Caco-2 (cell line): ENCODE measurements at regions of chr17 and their contacts with region 1.

Region 1: DNA sequence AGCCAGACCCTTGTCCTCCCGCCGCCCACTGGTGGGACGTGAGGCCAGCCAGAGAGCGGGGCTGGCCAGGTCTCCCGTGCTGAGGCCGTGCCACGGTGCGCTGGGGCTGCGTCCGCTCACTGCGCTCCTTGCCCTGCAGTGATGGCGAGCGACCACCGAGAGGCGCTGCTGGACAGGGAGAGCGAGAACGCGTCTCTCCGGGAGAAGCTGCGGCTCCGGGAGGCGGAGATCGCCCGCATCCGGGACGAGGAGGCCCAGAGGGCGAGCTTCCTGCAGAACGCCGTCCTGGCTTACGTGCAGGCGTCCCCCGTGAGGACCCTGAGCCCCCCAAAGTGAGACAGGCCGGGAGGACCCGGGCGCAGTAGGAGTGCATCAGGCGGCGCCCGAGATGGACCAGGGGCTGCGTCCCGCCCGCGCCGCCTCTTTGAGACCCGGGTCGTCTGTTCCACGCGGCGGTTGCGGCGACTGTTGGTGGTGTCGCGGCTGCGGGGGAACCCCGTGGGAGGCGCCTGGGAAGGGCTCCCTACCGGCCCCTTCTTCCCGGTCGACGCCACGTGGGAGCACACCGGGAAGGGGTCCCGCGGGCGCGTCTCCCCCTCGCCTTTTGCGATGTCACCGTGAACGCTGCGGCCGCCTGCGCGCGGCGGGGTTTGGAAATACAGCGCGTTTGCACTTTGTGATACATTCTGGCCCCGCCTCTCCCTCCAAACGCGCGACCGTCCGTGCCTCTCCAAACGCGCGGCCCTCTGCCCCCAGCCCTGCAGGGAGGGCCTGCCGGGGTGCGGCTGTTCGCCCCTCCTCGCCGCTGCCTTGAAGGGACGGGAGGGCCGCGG is 792 bp upstream of the RAC3 start:
- DNase-seq: peak; percentile 89 to 93
- H3K4me3 ChIP-seq: peak overlapping the region; percentile 64
- H3K4me3 Mint-ChIP-seq: peak overlapping the region; percentile 85
- H3K27ac Mint-ChIP-seq: peak overlapping the region; percentile 80
- H3K4me1 ChIP-seq: peaks cover 14% of the 10 kb centered on the region
- H3K4me1 Mint-ChIP-seq: peaks cover 11% of the 10 kb centered on the region
- H3K27me3 ChIP-seq: no peaks in the 10 kb centered on the region
- H3K27me3 Mint-ChIP-seq: no peaks in the 10 kb centered on the region
- CTCF ChIP-seq: peak; percentile 91

Region 2: DNA sequence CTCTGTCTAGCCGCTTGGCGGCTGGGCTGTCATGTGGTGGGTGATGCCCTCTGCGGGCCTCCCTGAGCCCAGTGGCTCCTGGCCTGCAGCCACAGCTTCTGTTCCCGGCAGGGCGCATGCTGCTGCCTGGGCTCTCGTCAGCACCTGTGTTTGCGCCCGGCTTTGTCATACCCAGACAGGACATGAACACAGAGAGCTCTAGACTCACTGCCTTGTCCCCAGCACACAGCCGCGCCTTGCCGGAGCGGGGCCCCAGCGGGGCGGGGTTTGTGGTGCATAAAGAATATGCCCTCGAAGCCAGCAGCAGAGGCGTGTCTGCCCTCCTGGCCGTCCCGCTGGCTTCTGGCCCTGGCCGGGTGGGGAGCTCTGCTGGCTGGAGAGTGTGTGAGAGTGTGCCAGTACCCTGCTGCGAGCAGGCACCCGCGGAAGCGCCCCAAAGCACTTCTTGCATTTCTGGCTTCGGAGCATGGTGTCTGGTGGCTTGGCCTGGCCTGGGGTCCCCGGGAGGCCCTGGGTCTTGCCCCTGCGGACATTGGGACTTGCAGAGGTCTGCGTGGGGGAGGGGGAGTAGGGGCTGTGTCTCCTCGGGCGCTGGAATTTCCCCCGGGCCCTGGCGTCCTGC is 38.9 kb before region 1 on chr17:
- CTCF ChIA-PET with region 1: no interaction called
- POLR2A ChIA-PET with region 1: no interaction called
- intact Hi-C with region 1: no loop called
- DNase-seq: peak; percentile 41 to 71
- H3K4me3 ChIP-seq: no peak overlapping the region
- H3K4me3 Mint-ChIP-seq: no peak overlapping the region
- H3K27ac Mint-ChIP-seq: peak overlapping the region; percentile 56
- H3K4me1 ChIP-seq: peaks cover 18% of the 10 kb centered on the region; the same call in 1 of the 2 replicates
- H3K4me1 Mint-ChIP-seq: peaks cover 6% of the 10 kb centered on the region
- H3K27me3 ChIP-seq: no peaks in the 10 kb centered on the region
- H3K27me3 Mint-ChIP-seq: no peaks in the 10 kb centered on the region
- CTCF ChIP-seq: no peak

Region 3: DNA sequence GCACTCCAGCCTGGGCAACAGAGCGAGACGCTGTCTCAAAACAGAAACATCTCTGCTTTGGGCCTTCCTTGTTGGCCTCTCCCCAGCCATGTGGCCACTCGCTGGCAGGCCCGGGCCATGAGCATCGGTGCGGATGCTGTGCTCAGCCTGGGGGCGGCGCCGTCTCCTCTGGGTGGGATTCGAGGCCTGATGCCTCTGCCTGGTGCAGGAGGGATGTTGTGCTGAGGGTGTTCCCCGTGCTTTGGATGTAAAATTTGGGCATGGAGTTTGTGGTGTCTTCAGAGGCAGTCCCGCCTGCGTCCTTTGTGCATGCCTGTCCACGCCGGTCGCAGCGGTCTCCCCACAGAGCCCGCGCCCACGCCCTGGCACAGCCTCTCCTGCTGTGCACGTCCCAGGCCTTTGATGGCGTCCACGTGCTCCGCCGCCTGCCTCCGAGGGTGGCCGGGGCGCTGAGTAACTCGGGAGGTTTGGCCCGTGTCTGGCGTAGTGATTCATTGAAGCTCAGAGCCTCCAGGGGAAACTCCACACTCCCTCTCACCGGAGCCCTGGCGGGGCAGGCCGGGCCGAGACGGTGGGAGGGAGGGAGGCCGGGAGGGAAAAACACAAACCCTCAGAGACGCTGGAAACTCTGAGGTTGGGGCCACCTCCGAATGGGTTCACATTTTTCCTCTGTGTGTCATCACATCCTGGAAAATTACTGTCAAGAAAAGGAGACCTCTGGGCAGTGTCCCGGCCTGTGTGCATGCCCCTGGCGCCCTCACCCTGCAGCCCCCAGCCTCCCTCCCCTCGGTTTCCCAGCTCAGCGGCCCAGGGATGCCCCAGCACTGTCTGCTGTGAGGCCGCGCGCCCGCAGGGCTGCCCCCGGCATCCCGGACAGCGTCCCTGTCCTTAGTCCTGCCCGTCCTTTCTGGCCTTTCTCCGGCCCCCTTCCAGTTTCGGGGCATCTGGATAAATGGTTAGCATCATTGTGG is 27.0 kb before region 1 on chr17:
- CTCF ChIA-PET with region 1: no interaction called
- POLR2A ChIA-PET with region 1: no interaction called
- intact Hi-C with region 1: no loop called
- DNase-seq: peak; percentile 71 to 80
- H3K4me3 ChIP-seq: no peak overlapping the region
- H3K4me3 Mint-ChIP-seq: no peak overlapping the region
- H3K27ac Mint-ChIP-seq: no peak overlapping the region
- H3K4me1 ChIP-seq: peaks cover 19% of the 10 kb centered on the region
- H3K4me1 Mint-ChIP-seq: no peaks in the 10 kb centered on the region
- H3K27me3 ChIP-seq: no peaks in the 10 kb centered on the region
- H3K27me3 Mint-ChIP-seq: no peaks in the 10 kb centered on the region
- CTCF ChIP-seq: no peak

Region 4: GRCh38 chr17:82013772-82014321 is 16.8 kb before region 1 on chr17:
- CTCF ChIA-PET with region 1: no interaction called
- POLR2A ChIA-PET with region 1: no interaction called
- intact Hi-C with region 1: no loop called
- DNase-seq: no peak
- H3K4me3 ChIP-seq: no peak overlapping the region
- H3K4me3 Mint-ChIP-seq: no peak overlapping the region
- H3K27ac Mint-ChIP-seq: no peak overlapping the region
- H3K4me1 ChIP-seq: 0 out of 2 replicates have a peak, but pooled peaks cover 4% of the 10 kb centered on the region
- H3K4me1 Mint-ChIP-seq: no peaks in the 10 kb centered on the region
- H3K27me3 ChIP-seq: no peaks in the 10 kb centered on the region
- H3K27me3 Mint-ChIP-seq: no peaks in the 10 kb centered on the region
- CTCF ChIP-seq: no peak

Region 5: DNA sequence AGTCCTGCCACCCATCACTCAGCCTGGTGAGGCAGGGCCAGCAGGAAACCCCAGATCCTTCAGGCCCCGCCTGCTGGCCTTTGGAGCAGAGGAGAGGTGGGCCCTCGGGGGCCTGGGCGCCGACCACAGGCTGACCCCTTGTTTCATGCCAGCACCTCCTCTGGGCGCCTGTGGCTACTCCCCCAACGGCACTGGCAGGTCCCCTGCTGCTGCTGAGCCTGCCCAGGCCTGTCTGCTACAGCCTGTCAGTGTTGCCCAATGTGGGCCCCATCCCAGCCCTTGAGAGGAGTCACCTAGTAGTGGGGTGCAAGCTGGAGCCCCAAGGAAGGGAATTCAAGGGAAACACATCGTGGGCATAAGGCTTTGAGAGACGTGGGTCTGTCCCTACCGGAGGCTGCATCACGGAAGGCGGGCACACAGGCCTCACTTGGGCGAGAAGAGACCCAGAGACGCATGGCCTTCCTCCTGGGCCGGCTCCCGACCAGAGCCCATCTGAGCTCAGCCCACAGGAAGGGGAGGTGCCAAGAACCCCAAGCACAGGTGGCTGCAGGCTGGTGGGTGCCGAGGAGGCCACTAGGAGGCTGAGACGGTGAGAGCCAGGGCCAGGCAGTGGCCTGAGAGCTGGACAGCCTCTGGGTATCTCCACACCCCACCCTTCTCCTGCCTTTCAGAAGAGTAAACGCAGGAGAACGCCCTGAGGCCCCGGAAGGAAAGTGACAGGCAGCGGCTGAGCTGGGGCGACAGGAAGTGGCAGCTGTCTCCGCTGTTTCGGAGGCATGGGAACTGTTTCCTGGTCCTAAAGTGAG is 75.4 kb after region 1 on chr17:
- CTCF ChIA-PET with region 1: interaction called, 10 read pairs
- POLR2A ChIA-PET with region 1: interaction called, 4 read pairs
- intact Hi-C with region 1: loop called (anchors 2 kb)
- DNase-seq: peak; percentile 90 to 94
- H3K4me3 ChIP-seq: no peak overlapping the region
- H3K4me3 Mint-ChIP-seq: peak overlapping the region; percentile 50
- H3K27ac Mint-ChIP-seq: peak overlapping the region; percentile 87
- H3K4me1 ChIP-seq: peaks cover 63% of the 10 kb centered on the region
- H3K4me1 Mint-ChIP-seq: peaks cover 42% of the 10 kb centered on the region
- H3K27me3 ChIP-seq: no peaks in the 10 kb centered on the region
- H3K27me3 Mint-ChIP-seq: no peaks in the 10 kb centered on the region
- CTCF ChIP-seq: peak; percentile 33 to 75

Region 6: DNA sequence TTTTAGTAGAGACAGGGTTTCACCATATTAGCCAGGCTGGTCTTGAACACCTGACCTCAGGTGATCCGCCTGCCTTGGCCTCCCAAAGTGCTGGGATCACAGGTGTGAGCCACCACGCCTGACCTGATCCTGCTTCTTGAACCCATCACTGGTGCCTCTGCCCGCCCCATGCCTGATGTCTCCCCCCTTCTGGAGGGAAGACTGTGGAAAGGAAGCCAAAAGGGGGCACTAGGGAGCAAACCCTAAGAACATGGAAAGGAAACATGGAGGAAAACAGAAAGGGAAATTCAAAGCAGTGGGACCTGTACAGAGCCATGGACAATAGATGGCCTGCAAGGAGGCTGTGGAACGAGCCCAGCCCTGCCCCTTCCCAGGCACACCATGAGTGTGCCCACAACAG is 98.4 kb after region 1 on chr17:
- CTCF ChIA-PET with region 1: interaction called, 4 read pairs
- POLR2A ChIA-PET with region 1: interaction called, 11 read pairs
- intact Hi-C with region 1: no loop called
- DNase-seq: no peak
- H3K4me3 ChIP-seq: no peak overlapping the region
- H3K4me3 Mint-ChIP-seq: no peak overlapping the region
- H3K27ac Mint-ChIP-seq: no peak overlapping the region
- H3K4me1 ChIP-seq: no peaks in the 10 kb centered on the region
- H3K4me1 Mint-ChIP-seq: no peaks in the 10 kb centered on the region
- H3K27me3 ChIP-seq: no peaks in the 10 kb centered on the region
- H3K27me3 Mint-ChIP-seq: no peaks in the 10 kb centered on the region
- CTCF ChIP-seq: no peak

Region 7: GRCh38 chr17:82153745-82154375 is 123.2 kb after region 1 on chr17:
- CTCF ChIA-PET with region 1: interaction called, 15 read pairs
- POLR2A ChIA-PET with region 1: no interaction called
- intact Hi-C with region 1: loop called (anchors 1 kb)
- DNase-seq: peak; percentile 77 to 89
- H3K4me3 ChIP-seq: no peak overlapping the region
- H3K4me3 Mint-ChIP-seq: no peak overlapping the region
- H3K27ac Mint-ChIP-seq: no peak overlapping the region
- H3K4me1 ChIP-seq: 0 out of 2 replicates have a peak, but pooled peaks cover 3% of the 10 kb centered on the region
- H3K4me1 Mint-ChIP-seq: no peaks in the 10 kb centered on the region
- H3K27me3 ChIP-seq: no peaks in the 10 kb centered on the region
- H3K27me3 Mint-ChIP-seq: no peaks in the 10 kb centered on the region
- CTCF ChIP-seq: peak; percentile 93 to 96